GM10248 (cell line): ENCODE measurements at regions of chr10 and their contacts with region 1.

Region 1: DNA sequence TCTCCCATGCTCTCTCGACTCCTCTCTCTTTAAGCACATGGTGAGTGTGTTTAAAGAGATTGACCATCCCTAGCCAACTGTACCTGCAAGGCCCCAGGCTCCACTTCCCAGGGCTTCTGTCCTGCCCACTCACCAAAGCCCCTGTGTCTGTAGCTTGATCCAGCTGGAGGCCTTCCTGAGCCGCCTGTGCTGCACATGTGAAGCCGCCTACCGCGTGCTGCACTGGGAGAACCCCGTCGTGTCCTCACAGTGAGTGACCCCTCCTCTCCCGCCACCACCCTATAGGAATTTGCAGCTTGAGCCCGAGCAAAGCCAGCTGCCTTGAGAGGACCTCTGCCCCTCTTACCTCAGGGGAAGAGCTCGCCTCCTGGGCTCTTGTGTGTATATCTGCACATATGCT is 11.2 kb downstream of the ZFYVE27 start:
- DNase-seq: no peak
- CTCF ChIP-seq: no peak

Region 2: DNA sequence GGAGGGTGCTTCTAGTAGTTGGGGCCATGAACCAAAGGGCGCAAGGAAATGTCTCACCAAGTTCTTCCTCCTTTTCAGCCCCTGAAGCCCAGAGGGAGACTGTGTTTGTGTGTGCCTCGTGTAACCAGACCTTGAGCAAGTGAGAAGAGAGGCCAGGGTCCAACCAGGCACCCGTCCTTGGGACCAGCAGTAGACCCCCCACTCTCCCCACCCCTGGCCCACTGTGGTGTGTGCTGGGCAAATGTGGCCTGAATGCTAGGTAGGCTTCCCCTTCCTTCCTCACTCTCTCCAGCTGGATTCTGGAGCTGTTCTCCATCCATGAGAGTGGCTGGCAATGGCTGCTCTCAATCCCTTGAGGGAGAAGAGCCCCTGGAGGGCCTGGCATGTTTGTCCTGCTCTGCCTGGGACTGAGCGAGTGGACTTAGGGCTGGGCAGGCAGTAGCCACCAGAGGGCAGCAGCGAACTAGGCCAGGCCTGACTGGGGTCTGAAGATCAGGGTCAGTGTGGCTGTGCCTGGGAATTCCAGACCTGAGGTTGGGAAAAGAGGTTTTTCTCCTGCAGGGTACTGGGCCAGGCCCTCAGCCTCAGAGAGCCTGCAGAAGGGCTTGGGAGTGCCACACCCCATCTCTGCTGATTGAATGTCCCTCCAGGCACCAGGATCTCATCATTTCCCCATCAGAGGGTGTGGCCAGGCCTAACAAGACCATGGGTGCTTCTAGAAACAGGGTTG is 11.2 kb after region 1 on chr10:
- CTCF ChIA-PET with region 1: interaction called, 11 read pairs
- POLR2A ChIA-PET with region 1: interaction called, 3 read pairs
- DNase-seq: peak; percentile 72
- CTCF ChIP-seq: peak; percentile 90

Region 3: DNA sequence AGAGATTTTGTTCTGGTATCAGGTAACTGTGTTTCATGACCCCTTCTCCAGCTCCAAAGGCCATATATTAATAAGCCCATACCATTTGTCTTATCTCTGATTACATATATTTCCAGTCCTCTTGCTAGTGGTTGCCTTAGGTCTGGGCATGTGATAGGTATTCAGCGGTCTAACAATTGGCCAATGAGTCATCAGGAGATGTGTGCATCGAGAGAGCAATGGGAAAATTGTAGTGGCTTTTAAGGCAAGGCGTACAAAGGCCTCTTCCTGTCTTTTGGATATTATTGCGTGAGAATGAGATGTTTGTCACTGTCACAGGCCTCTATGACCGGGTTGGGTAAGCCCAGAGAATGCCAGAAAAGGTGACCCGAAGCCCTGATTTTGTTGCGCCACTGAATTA is 62.3 kb after region 1 on chr10:
- CTCF ChIA-PET with region 1: no interaction called
- POLR2A ChIA-PET with region 1: no interaction called
- DNase-seq: no peak
- CTCF ChIP-seq: no peak